ENCODE measurements at regions of chr7 and their contacts with region 1.

Region 1: GRCh38 chr7:103296901-103297836 is at the start of gene PMPCB:
- DNase-seq: peak; percentile 92
- H3K4me3 Mint-ChIP-seq: peak within 1 kb of the TSS; percentile 86
- H3K27ac Mint-ChIP-seq: peak within 1 kb of the TSS; percentile 77
- H3K4me1 Mint-ChIP-seq: no peaks in the 10 kb centered on the region
- H3K27me3 Mint-ChIP-seq: peaks cover under 1% of the 10 kb centered on the region
- CTCF ChIP-seq: peak; percentile 94
- total RNA-seq, gene PMPCB: 64.9 and 73.9 TPM in 2 replicates

Region 2: DNA sequence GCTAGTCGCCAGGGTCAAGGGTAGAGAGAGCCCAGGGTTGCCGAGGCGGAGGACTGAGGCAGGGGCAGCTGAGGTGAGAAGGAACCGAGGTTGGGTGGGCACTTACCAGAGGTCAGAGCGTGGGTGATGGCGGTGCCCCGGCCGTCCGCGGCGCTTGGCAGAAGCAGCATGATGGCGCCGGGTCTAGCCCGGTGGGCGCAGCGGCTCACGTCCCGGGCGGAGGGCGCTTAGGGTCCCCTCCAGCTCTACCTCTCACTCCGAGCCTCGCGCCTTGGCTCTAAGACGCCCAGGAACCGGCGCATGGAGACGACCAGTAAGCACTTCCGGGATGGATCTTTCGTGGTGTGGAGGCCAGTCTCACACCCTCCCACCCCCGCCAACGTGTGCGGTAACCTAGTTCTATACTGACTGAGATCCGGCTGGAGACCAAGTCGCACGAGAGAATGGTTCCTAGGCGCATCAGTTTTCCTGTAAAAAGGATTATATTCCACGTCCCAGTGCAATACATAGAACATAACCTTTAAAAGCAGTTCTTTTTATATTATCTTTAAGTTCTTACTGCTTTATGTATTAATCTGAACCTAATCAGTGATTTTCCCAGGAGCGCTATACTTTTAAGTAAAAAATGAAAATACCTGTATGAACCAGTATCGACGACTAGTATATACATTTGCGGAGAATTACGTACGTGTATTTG is 47.4 kb after region 1 on chr7 and contains the start of gene DNAJC2:
- CTCF ChIA-PET with region 1: interaction called, 6 read pairs
- POLR2A ChIA-PET with region 1: interaction called, 12 read pairs
- intact Hi-C with region 1: loop called (anchors 10 kb)
- DNase-seq: peak; percentile 95
- H3K4me3 Mint-ChIP-seq: peak within 1 kb of the TSS; percentile 88
- H3K27ac Mint-ChIP-seq: peak within 1 kb of the TSS; percentile 96
- H3K4me1 Mint-ChIP-seq: peaks cover 25% of the 10 kb centered on the region
- H3K27me3 Mint-ChIP-seq: no peaks in the 10 kb centered on the region
- CTCF ChIP-seq: no peak
- total RNA-seq, gene DNAJC2: 37.1 and 58.2 TPM in 2 replicates

Region 3: GRCh38 chr7:103413407-103413806 is 116.2 kb after region 1 on chr7:
- CTCF ChIA-PET with region 1: interaction called, 10 read pairs
- POLR2A ChIA-PET with region 1: no interaction called
- intact Hi-C with region 1: no loop called
- DNase-seq: no peak
- H3K4me3 Mint-ChIP-seq: no peak overlapping the region
- H3K27ac Mint-ChIP-seq: no peak overlapping the region
- H3K4me1 Mint-ChIP-seq: no peaks in the 10 kb centered on the region
- H3K27me3 Mint-ChIP-seq: peaks cover 75% of the 10 kb centered on the region
- CTCF ChIP-seq: no peak

Region 4: DNA sequence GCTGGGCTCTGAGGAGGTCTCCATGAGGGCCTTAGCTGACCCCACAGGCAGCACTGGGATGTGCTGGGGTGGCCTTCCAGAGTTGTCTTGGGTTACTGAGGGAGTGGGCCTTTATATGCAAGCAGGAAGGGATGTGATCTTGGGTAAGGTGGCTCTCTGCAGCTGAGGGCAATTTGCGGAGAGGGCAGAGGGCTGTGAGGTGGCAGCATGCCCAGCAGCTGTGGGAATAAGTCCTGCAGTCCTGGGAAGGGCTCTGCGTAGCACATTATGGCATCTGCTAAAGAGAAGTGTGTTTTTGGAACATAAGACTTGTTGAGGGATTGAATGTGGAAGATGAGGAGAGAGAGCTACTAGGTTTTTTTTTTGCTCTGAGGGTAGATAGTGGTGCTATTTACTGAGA is 1617.3 kb after region 1 on chr7:
- CTCF ChIA-PET with region 1: interaction called, 3 read pairs
- POLR2A ChIA-PET with region 1: no interaction called
- intact Hi-C with region 1: loop called (anchors 10 kb)
- DNase-seq: no peak
- H3K4me3 Mint-ChIP-seq: no peak overlapping the region
- H3K27ac Mint-ChIP-seq: no peak overlapping the region
- H3K4me1 Mint-ChIP-seq: no peaks in the 10 kb centered on the region
- H3K27me3 Mint-ChIP-seq: peaks cover 69% of the 10 kb centered on the region
- CTCF ChIP-seq: no peak